Panc1 (cell line): ENCODE measurements at regions of chr1 and their contacts with region 1.

Region 1: GRCh38 chr1:27102707-27103491 is 52.0 kb downstream of the SLC9A1 start:
- DNase-seq: no peak
- ATAC-seq: peak; percentile 80
- H3K4me3 ChIP-seq: no peak overlapping the region
- H3K27ac ChIP-seq: no peak overlapping the region
- H3K4me1 ChIP-seq: peaks cover 13% of the 10 kb centered on the region
- H3K27me3 ChIP-seq: no peaks in the 10 kb centered on the region
- CTCF ChIP-seq: peak; percentile 97

Region 2: DNA sequence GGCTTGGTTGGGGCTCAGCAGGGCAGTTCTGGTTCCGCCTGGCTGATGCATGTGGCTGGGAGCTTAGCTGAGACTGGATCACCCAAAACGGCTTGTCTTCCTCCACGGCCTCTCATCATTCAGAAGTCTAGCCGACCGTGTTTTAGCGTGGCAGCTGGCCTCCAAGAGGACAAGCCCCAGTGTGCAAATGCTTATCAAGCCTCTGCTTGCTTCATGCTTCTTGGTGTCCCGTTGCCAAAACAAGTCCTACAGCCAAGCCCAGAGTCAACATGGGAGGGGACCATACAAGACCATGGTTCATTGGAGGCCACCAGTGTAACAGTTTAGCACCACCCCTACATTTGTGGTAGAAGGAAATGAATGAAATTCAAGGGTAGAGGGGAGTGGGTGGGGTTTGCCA is 132.1 kb before region 1 on chr1:
- CTCF ChIA-PET with region 1: interaction called, 4 read pairs
- POLR2A ChIA-PET with region 1: interaction called, 17 read pairs
- in situ Hi-C with region 1: no loop called
- intact Hi-C with region 1: no loop called
- DNase-seq: no peak
- ATAC-seq: no peak
- H3K4me3 ChIP-seq: no peak overlapping the region
- H3K27ac ChIP-seq: no peak overlapping the region
- H3K4me1 ChIP-seq: 0 out of 2 replicates have a peak, but pooled peaks cover 3% of the 10 kb centered on the region
- H3K27me3 ChIP-seq: no peaks in the 10 kb centered on the region
- CTCF ChIP-seq: no peak

Region 3: DNA sequence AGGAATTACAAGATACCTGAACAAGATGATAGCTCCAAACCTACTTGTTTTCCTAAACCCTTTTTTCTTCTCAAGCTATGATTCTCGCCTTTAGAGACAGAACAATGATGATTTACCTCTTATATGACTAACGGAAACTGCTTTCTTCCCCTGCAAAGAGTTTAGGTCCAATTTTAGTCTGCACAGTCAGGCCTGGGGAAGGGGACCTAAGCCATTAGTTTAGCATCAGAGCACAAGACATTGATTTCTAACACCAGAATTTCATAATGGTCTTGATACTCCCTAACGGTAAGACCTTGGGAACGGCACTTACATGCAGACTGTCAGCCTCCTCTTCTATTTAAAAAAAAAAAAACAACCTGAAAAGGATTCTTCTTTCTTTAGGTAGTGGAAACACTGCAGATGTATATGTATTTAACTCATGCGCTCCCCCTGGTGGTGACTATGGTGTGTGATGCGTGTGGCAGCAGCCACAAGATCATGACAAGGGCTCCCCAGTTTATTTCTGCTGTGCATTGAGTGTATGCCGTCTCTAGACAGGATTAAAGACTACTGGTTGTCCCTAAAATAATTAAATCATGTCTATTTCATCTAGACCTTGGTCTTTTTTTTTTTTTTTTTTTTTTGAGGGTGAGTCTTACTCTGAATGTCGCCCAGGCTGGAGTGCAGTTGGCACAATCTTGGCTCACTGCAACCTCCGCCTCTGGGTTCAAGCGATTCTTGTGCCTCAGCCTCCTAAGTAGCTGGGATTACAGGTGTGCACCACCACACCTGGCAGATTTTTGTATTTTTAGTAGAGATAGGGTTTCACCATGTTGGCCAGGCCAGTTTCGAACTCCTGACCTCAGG is 181.8 kb after region 1 on chr1:
- CTCF ChIA-PET with region 1: interaction called, 6 read pairs
- POLR2A ChIA-PET with region 1: no interaction called
- in situ Hi-C with region 1: no loop called
- intact Hi-C with region 1: loop called (anchors 1 kb)
- DNase-seq: peak; percentile 52
- ATAC-seq: peak; percentile 96
- H3K4me3 ChIP-seq: no peak overlapping the region
- H3K27ac ChIP-seq: no peak overlapping the region
- H3K4me1 ChIP-seq: no peaks in the 10 kb centered on the region
- H3K27me3 ChIP-seq: no peaks in the 10 kb centered on the region
- CTCF ChIP-seq: peak; percentile 89

Region 4: DNA sequence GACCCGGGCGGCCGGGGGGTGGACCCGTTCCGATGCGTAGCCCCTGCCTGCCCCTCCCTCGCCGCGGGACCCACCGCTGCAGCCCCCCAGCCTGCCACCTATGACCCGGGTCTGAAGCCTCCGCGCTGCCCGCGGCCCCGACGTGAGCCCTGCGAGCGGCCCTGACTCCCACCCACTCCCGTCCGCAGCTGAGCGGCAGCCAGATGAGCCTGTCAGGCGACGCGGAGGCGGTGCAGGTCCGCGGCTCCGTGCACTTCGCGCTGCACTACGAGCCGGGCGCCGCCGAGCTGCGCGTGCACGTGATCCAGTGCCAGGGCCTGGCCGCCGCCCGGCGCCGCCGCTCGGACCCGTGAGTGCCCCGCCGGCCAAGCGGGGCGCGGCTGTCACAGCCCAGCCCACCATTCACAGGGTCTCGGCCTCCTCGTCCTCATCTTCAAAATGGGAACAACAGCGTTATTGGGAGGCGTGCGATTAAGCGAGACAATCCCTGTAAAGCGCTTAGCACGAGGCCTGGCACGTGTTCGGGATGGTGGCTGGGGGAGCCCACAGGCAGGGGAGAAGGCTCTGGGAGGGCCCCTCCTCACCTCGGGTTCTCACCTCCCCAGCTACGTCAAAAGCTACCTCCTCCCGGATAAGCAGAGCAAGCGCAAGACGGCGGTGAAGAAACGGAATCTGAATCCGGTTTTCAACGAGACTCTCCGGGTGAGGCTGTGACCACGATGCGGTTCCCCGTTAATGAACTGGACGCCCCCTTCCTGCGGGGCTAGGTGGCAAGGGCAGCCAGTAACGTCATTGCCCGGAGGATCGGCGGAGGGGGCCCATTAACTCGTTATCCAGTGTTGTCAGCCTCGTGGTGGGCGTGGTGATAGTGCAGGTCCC is 247.1 kb after region 1 on chr1:
- CTCF ChIA-PET with region 1: interaction called, 11 read pairs
- POLR2A ChIA-PET with region 1: no interaction called
- in situ Hi-C with region 1: no loop called
- intact Hi-C with region 1: no loop called
- DNase-seq: no peak
- ATAC-seq: peak; percentile 89
- H3K4me3 ChIP-seq: peak overlapping the region; percentile 46 to 59
- H3K27ac ChIP-seq: peak overlapping the region; percentile 83
- H3K4me1 ChIP-seq: peaks cover 19% of the 10 kb centered on the region
- H3K27me3 ChIP-seq: no peaks in the 10 kb centered on the region
- CTCF ChIP-seq: no peak